Activated T-helper 2 cell treated with anti-CD3 and anti-CD28 coated beads, Interferon-gamma antibody, Interleukin-2, Interleukin-4, amounts not matched to agents 10 μg/mL and 5 μg/mL and 100 μg/mL, durations not matched to agents 14 hours and 24 hours and 36 hours (primary cell): ENCODE measurements at regions of chr11 and their contacts with region 1.

Region 1: GRCh38 chr11:65961232-65961901 is at the start of gene SART1:
- DNase-seq: peak; percentile 94
- H3K4me3 Mint-ChIP-seq: peak within 1 kb of the TSS; percentile 96
- H3K27ac Mint-ChIP-seq: peak within 1 kb of the TSS; percentile 97
- H3K4me1 Mint-ChIP-seq: peaks cover 36% of the 10 kb centered on the region
- H3K27me3 Mint-ChIP-seq: no peaks in the 10 kb centered on the region
- total RNA-seq, gene SART1: 81.7 and 98.5 TPM in 2 replicates

Region 2: GRCh38 chr11:65888163-65888814 is 73.1 kb before region 1 on chr11 and contains the start of gene FIBP:
- intact Hi-C with region 1: loop called (anchors 2 kb)
- DNase-seq: peak; percentile 91
- H3K4me3 Mint-ChIP-seq: peak within 1 kb of the TSS; percentile 98
- H3K27ac Mint-ChIP-seq: peak within 1 kb of the TSS; percentile 92
- H3K4me1 Mint-ChIP-seq: peaks cover 47% of the 10 kb centered on the region
- H3K27me3 Mint-ChIP-seq: no peaks in the 10 kb centered on the region
- total RNA-seq, gene FIBP: 95.4 and 99.8 TPM in 2 replicates

Region 3: DNA sequence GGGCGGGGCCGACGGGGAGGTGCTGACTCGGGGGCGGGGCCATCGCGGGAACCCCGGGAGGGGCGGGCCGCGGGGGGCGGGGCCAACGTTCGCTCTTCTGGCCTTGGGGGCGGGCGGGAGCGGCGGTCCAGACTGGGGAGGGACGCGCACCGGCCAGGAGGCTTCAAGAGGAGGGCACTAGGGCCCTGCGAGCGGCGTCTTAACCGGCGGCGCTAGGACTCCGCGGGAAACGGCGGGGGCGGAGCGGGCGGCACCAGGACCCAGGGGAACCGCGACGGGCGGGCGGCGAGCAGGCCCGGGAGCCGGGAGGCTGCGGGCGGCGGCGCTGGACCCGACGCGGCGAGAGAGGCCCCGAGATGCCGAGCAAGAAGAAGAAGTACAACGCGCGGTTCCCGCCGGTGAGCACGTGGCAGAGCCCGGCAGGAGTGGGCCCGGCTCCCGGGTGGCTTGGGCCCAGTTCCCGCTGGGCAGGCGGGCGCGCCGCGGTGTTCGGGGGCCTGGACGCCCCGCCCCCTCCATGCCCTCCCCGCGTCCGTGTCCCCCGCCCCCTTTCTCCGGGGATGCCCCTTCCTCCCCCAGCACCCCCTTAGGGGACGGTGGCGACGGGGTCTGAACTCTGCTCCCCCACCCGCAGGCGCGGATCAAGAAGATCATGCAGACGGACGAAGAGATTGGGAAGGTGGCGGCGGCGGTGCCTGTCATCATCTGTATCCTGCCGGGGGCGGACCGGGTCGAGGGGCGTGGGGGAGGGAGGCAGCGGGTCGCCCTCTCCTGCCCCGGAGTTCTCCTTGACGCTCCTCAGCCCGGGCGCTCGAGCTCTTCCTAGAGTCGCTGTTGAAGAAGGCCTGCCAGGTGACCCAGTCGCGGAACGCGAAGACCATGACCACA is 42.0 kb before region 1 on chr11 and contains the start of gene DRAP1:
- intact Hi-C with region 1: loop called (anchors 2 kb)
- DNase-seq: peak; percentile 97
- H3K4me3 Mint-ChIP-seq: peak within 1 kb of the TSS; percentile 88
- H3K27ac Mint-ChIP-seq: peak within 1 kb of the TSS; percentile 85
- H3K4me1 Mint-ChIP-seq: peaks cover 19% of the 10 kb centered on the region
- H3K27me3 Mint-ChIP-seq: no peaks in the 10 kb centered on the region
- total RNA-seq, gene DRAP1: 116 and 118 TPM in 2 replicates

Region 4: GRCh38 chr11:65927904-65928397 is 33.4 kb before region 1 on chr11:
- intact Hi-C with region 1: loop called (anchors 2 kb)
- DNase-seq: peak; percentile 75
- H3K4me3 Mint-ChIP-seq: peak overlapping the region; percentile 65
- H3K27ac Mint-ChIP-seq: peak overlapping the region; percentile 89
- H3K4me1 Mint-ChIP-seq: peaks cover 31% of the 10 kb centered on the region
- H3K27me3 Mint-ChIP-seq: no peaks in the 10 kb centered on the region

Region 5: GRCh38 chr11:66001942-66002647 is 40.7 kb after region 1 on chr11 and contains the starts of genes BANF1 and EIF1AD:
- intact Hi-C with region 1: loop called (anchors 1 kb)
- DNase-seq: peak; percentile 96
- H3K4me3 Mint-ChIP-seq: peak within 1 kb of the TSS; percentile 98
- H3K27ac Mint-ChIP-seq: peak within 1 kb of the TSS; percentile 99
- H3K4me1 Mint-ChIP-seq: peaks cover 20% of the 10 kb centered on the region
- H3K27me3 Mint-ChIP-seq: no peaks in the 10 kb centered on the region
- total RNA-seq, gene BANF1: 272 and 281 TPM in 2 replicates
- total RNA-seq, gene EIF1AD: 64.5 and 65.2 TPM in 2 replicates